ENCODE measurements at regions of chr15 and their contacts with region 1.

Region 1: DNA sequence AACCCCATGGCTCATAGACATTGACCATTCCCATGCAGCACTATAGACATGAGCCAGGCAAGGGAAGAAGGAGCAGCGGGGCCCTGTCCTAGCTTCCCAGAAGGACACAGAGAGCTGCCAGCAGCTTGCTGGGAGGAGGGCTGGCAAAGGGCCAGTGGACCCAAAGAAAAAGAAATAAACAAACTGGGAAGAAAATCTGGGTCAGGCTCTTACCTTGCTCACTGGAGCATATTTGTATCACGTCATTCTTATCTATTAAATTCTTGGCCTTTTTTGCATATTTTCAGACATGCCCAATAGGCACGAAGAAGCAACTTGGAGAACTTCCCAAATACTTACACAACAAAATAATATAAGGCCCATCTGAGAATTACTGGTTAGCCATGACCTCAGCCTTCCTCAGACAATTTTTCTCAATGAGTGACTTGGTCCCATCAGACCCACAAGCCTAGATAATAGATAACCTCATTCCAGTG is 28.4 kb downstream of the RASGRP1 start:
- DNase-seq: no peak
- H3K4me3 ChIP-seq: no peak overlapping the region
- H3K4me3 Mint-ChIP-seq: peak overlapping the region in 4 of 8 donors; percentile 14 to 73 (median 34)
- H3K27ac ChIP-seq: no peak overlapping the region
- H3K27ac Mint-ChIP-seq: peak overlapping the region in 6 of 7 donors; percentile 36 to 84 (median 59)
- H3K4me1 ChIP-seq: peaks cover 97% of the 10 kb centered on the region
- H3K4me1 Mint-ChIP-seq: peaks cover 83 to 100% (median 92%) of the 10 kb centered on the region in 4 donors
- H3K27me3 ChIP-seq: no peaks in the 10 kb centered on the region
- H3K27me3 Mint-ChIP-seq: no peaks in the 10 kb centered on the region

Region 2: DNA sequence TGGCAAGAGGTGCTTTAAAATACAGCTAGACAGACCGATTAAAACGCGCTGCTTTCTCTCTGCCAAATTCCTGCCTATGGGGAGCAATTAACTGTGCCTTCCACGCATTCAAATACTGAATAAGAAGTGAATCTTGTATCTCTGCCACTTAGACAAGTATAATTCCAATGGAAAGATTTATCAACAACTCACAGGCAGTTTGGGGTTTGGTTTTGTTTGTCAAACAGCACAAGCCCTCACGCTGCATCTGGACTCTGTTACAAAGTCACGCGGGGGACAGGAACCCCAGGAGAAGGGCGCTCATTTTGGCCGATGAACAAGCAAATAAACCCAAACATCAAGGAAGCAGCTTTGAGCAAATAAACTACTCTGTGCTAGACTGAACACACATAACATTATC is 663.6 kb before region 1 on chr15:
- CTCF ChIA-PET with region 1: no interaction called
- POLR2A ChIA-PET with region 1: no interaction called
- intact Hi-C with region 1: no loop called
- DNase-seq: no peak
- H3K4me3 ChIP-seq: no peak overlapping the region
- H3K4me3 Mint-ChIP-seq: no peak overlapping the region
- H3K27ac ChIP-seq: no peak overlapping the region
- H3K27ac Mint-ChIP-seq: no peak overlapping the region
- H3K4me1 ChIP-seq: no peaks in the 10 kb centered on the region
- H3K4me1 Mint-ChIP-seq: no peaks in the 10 kb centered on the region
- H3K27me3 ChIP-seq: no peaks in the 10 kb centered on the region
- H3K27me3 Mint-ChIP-seq: peaks cover 4 to 6% of the 10 kb centered on the region in 2 donors

Region 3: GRCh38 chr15:38490242-38490922 is 45.9 kb before region 1 on chr15:
- CTCF ChIA-PET with region 1: no interaction called
- POLR2A ChIA-PET with region 1: no interaction called
- intact Hi-C with region 1: no loop called
- DNase-seq: no peak
- H3K4me3 ChIP-seq: no peak overlapping the region
- H3K4me3 Mint-ChIP-seq: peak overlapping the region in 1 of 8 donors; percentile 2
- H3K27ac ChIP-seq: no peak overlapping the region
- H3K27ac Mint-ChIP-seq: peak overlapping the region; percentile 8 to 92 (median 64)
- H3K4me1 ChIP-seq: peaks cover 29% of the 10 kb centered on the region
- H3K4me1 Mint-ChIP-seq: peaks cover 28 to 34% (median 33%) of the 10 kb centered on the region in 4 donors
- H3K27me3 ChIP-seq: no peaks in the 10 kb centered on the region
- H3K27me3 Mint-ChIP-seq: no peaks in the 10 kb centered on the region

Region 4: DNA sequence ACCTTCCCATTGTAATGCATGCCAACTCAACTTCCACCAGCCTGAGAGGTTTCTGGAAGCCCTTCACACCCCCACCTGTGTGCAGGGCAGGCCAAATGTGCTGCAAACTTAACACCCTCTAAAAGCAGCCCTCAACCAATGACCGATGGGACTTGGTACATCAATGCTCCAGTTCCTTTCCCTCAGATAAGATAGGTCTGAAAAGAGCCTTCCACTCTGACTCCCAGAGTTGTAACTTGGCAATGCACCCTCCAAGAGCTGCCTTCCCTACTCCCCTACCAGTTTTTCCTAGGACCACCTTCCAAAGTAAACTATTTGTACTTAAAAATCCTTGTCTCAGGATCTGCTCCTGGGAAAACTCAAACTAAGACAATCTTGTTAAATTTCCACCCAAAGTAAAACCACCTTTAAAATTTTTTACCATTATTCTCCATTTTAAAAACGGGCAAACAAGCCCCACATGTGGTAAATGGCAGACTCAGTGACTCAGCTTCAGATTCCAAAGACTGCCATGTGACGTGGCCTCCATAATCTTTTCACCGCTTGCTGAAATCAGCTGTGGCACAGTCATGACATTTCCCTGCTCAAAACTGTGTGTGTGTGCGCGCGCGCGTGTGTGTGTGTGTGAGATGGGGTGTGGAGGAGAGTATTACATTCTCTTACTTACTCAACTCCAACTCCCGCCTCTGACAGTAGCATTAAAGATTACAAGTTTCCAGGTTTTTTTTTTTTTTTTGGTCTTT is 11.2 kb after region 1 on chr15:
- CTCF ChIA-PET with region 1: interaction called, 3 read pairs
- POLR2A ChIA-PET with region 1: interaction called, 8 read pairs
- intact Hi-C with region 1: loop called (anchors 1 kb)
- DNase-seq: no peak
- H3K4me3 ChIP-seq: no peak overlapping the region
- H3K4me3 Mint-ChIP-seq: peak overlapping the region in 5 of 8 donors; percentile 15 to 63 (median 20)
- H3K27ac ChIP-seq: no peak overlapping the region
- H3K27ac Mint-ChIP-seq: peak overlapping the region; percentile 65 to 91 (median 80)
- H3K4me1 ChIP-seq: peaks cover 98% of the 10 kb centered on the region
- H3K4me1 Mint-ChIP-seq: peaks cover 65 to 90% (median 80%) of the 10 kb centered on the region in 4 donors
- H3K27me3 ChIP-seq: no peaks in the 10 kb centered on the region
- H3K27me3 Mint-ChIP-seq: no peaks in the 10 kb centered on the region

Region 5: GRCh38 chr15:38554354-38554753 is 18.1 kb after region 1 on chr15:
- CTCF ChIA-PET with region 1: interaction called, 5 read pairs
- POLR2A ChIA-PET with region 1: interaction called, 8 read pairs
- intact Hi-C with region 1: loop called (anchors 1 kb)
- DNase-seq: peak in 3 of 5 donors; percentile 37 to 74 (median 51)
- H3K4me3 ChIP-seq: peak overlapping the region in 1 of 2 donors; percentile 10
- H3K4me3 Mint-ChIP-seq: peak overlapping the region; percentile 3 to 99 (median 89)
- H3K27ac ChIP-seq: peak overlapping the region; percentile 89
- H3K27ac Mint-ChIP-seq: peak overlapping the region; percentile 64 to 97 (median 79)
- H3K4me1 ChIP-seq: peaks cover 100% of the 10 kb centered on the region
- H3K4me1 Mint-ChIP-seq: peaks cover 80 to 94% (median 88%) of the 10 kb centered on the region in 4 donors
- H3K27me3 ChIP-seq: no peaks in the 10 kb centered on the region
- H3K27me3 Mint-ChIP-seq: no peaks in the 10 kb centered on the region